HepG2 (cell line): ENCODE measurements at regions of chr16 and their contacts with region 1.

Region 1: DNA sequence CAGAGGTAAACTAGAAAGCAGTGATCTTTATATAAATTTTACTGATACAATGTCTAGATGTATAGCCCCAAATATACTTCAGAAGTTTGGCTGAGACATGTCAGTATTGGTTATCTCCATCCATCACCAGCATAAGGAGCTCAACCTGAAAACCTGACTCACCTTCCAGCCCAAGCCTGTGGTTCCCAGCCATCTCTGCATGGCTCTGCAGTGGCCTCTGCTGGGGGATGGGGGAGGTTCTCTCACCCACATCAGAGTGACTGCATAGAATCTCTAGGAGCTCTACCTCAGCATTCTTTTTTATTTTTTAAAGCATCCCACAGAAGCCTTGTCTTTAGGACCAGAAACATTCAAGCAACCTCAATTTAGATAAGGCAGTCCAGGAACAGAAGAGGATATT is 27.3 kb downstream of the USP7 start:
- DNase-seq: peak; percentile 70
- ATAC-seq: peak; percentile 94
- H3K4me3 ChIP-seq: no peak overlapping the region
- H3K27ac ChIP-seq: no peak overlapping the region
- H3K4me1 ChIP-seq: peaks cover 64% of the 10 kb centered on the region
- H3K27me3 ChIP-seq: no peaks in the 10 kb centered on the region
- CTCF ChIP-seq: peak; percentile 79
- EP300 ChIP-seq: no peak
- POLR2A ChIP-seq: no peak
- RAD21 ChIP-seq: peak; percentile 45

Region 2: DNA sequence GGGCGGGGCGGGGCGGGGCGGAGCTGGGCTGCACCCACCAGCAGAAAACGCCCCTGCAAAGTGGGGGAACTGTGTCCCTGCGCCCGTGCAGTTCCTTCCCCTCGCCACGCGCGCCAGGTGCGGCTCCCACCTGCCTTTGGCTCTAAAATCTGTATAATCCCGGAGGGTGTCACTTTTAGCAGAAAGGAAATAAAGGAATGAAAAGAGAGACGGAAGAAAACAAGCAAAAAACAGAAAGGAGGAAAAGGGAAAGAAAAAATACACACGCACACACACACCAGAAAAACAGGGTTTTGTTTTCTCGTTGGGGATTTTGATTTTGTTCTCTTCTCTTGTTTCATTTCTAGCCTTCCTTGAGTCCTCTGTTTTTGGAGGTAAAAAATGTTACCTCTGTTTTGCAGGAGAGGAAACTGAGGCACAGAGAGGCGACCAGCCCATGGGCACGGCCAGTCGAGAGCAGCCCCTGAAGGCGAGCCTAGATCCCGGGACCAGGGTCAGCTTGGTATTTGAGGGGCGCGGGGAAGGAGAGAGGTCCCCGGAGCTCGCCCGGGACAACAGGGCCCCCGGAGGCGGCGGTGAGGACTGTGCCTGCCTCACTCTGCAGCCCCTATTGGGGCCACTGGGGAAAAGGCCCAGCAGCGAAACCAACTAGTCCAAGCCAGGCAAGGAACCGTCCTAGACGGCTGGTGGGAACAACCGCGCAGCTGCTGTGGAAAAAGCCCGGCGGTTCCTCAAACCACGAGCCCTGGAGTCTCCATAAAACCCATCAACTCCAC is 67.0 kb before region 1 on chr16:
- CTCF ChIA-PET with region 1: no interaction called
- POLR2A ChIA-PET with region 1: no interaction called
- in situ Hi-C with region 1: no loop called
- intact Hi-C with region 1: no loop called
- DNase-seq: peak; percentile 65
- ATAC-seq: peak; percentile 54
- H3K4me3 ChIP-seq: peak overlapping the region; percentile 55 to 76 (median 71)
- H3K27ac ChIP-seq: peak overlapping the region; percentile 46
- H3K4me1 ChIP-seq: peaks cover 76% of the 10 kb centered on the region
- H3K27me3 ChIP-seq: no peaks in the 10 kb centered on the region; a peak in 1 of 5 replicates
- CTCF ChIP-seq: no peak; the same call in 1 of the 2 replicates
- EP300 ChIP-seq: no peak
- POLR2A ChIP-seq: no peak
- RAD21 ChIP-seq: peak; percentile 26; the same call in 1 of the 2 replicates

Region 3: GRCh38 chr16:8951447-8952280 is 15.2 kb after region 1 on chr16:
- CTCF ChIA-PET with region 1: interaction called, 3 read pairs
- POLR2A ChIA-PET with region 1: interaction called, 4 read pairs
- in situ Hi-C with region 1: no loop called
- intact Hi-C with region 1: loop called (anchors 2 kb)
- DNase-seq: no peak
- ATAC-seq: no peak
- H3K4me3 ChIP-seq: 0 out of 6 replicates have a peak overlapping the region, but pooled peaks of 1 of the 3 experiments have one; percentile 1
- H3K27ac ChIP-seq: peak overlapping the region; percentile 3
- H3K4me1 ChIP-seq: peaks cover 94% of the 10 kb centered on the region
- H3K27me3 ChIP-seq: no peaks in the 10 kb centered on the region
- CTCF ChIP-seq: no peak
- EP300 ChIP-seq: no peak
- POLR2A ChIP-seq: peak in 1 of 2 experiments; percentile 26; a peak in 1 of 4 replicates
- RAD21 ChIP-seq: no peak

Region 4: GRCh38 chr16:8958344-8959167 is 22.1 kb after region 1 on chr16:
- CTCF ChIA-PET with region 1: interaction called, 3 read pairs
- POLR2A ChIA-PET with region 1: no interaction called
- in situ Hi-C with region 1: no loop called
- intact Hi-C with region 1: loop called (anchors 2 kb)
- DNase-seq: no peak
- ATAC-seq: no peak; the same call in 2 of the 3 replicates
- H3K4me3 ChIP-seq: peak overlapping the region in 1 of 3 experiments; percentile 3; a peak in 1 of 6 replicates
- H3K27ac ChIP-seq: peak overlapping the region; percentile 2
- H3K4me1 ChIP-seq: peaks cover 79% of the 10 kb centered on the region
- H3K27me3 ChIP-seq: no peaks in the 10 kb centered on the region; a peak in 1 of 5 replicates
- CTCF ChIP-seq: no peak
- EP300 ChIP-seq: no peak
- POLR2A ChIP-seq: 0 out of 4 replicates have a peak, but pooled peaks of 1 of the 2 experiments have one; percentile 28
- RAD21 ChIP-seq: no peak

Region 5: DNA sequence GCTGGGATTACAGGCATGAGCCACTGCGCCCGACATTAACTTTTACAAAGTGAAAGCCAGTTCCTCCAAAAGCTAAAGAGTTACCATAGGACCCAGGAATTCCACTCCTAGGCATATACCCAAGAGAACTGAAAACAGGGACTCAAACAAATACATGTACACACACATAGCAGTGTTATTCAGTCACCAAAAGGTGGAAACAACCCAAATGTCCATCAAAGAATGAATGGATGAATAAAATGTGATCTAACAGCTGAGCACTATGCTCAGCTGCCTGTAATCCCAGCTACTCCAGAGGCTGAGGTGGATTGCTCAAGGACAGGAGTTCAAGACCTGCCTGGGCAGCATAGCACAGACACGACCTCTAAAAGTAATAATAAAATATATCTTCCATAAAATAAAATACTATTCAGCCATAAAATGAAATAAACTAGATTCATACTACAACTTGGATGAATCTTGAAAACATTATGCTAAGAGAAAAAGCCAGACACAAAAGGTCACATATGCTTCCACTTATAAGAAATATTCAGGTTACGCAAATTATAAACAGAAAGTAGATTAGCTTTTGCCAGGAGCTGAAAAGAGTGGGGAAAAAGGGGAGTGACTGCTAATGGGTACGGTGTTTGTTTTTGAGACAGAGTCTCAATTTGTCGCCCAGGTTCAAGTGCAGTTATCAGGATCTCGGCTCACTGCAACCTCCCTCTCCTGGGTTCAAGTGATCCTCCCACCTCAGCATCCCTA is 36.6 kb after region 1 on chr16:
- CTCF ChIA-PET with region 1: no interaction called
- POLR2A ChIA-PET with region 1: no interaction called
- in situ Hi-C with region 1: no loop called
- intact Hi-C with region 1: no loop called
- DNase-seq: no peak
- ATAC-seq: no peak
- H3K4me3 ChIP-seq: no peak overlapping the region
- H3K27ac ChIP-seq: no peak overlapping the region
- H3K4me1 ChIP-seq: peaks cover 10% of the 10 kb centered on the region
- H3K27me3 ChIP-seq: peaks cover 1 to 4% of the 10 kb centered on the region in 2 experiments; a peak in 3 of 5 replicates
- CTCF ChIP-seq: no peak
- EP300 ChIP-seq: no peak
- POLR2A ChIP-seq: no peak
- RAD21 ChIP-seq: no peak

Region 6: DNA sequence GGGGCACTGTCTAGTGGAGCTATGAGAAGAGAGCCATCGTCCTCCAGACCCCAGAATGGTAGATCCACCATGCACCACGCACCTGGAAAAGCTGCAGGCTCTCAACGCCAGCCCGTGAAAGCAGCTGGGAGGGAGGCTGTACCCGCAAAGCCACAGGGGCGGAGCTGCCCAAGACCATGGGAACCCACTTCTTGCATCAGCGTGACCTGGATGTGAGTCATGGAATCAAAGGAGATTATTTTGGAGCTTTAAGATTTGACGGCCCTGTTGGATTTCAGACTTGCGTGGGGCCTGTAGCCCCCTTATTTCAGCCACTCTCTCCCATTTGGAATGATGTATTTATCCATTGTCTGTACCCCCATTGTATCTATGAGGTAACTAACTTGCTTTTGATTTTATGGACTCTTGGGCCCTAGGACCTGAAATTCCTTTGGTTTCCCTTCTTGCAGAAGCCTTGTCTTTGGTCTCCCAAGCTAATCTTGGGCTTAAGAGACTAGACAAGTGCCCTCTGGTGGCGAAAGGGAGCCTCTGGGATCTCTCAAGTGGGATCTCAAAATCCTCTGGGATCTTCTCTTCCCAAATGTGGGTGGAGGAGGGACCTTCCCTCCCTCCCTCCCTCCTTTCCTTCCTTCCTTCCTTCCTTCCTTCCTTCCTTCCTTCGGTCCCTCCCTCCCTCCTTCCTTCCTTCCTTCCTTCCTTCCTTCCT is 96.9 kb after region 1 on chr16:
- CTCF ChIA-PET with region 1: no interaction called
- POLR2A ChIA-PET with region 1: no interaction called
- in situ Hi-C with region 1: no loop called
- intact Hi-C with region 1: loop called (anchors 1 kb)
- DNase-seq: peak; percentile 76
- ATAC-seq: peak; percentile 85
- H3K4me3 ChIP-seq: no peak overlapping the region
- H3K27ac ChIP-seq: no peak overlapping the region
- H3K4me1 ChIP-seq: no peaks in the 10 kb centered on the region
- H3K27me3 ChIP-seq: peaks cover 0 to 6% of the 10 kb centered on the region in 2 experiments; a peak in 3 of 5 replicates
- CTCF ChIP-seq: peak; percentile 76
- EP300 ChIP-seq: no peak
- POLR2A ChIP-seq: no peak
- RAD21 ChIP-seq: peak; percentile 52

Region 7: DNA sequence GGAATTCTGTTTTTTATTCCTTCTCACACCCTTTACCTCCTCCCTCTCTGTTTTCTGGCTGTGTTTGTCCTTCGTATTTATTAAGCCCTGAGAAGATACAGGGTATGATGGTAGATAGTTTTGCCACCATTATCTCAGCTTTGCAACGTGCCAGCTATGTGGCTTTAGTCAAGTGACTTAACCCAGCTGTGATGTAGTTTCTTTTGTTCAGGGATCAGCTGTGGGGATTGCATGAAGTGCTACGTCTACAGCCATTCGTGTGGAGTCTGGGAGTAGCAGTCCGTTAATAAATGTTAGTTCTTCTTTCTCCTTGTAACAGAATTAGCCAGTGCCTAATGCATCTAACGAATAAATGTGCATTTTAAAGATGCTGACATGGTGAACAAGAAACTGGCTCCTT is 283.4 kb after region 1 on chr16:
- CTCF ChIA-PET with region 1: no interaction called
- POLR2A ChIA-PET with region 1: no interaction called
- in situ Hi-C with region 1: no loop called
- intact Hi-C with region 1: no loop called
- DNase-seq: no peak
- ATAC-seq: no peak
- H3K4me3 ChIP-seq: no peak overlapping the region
- H3K27ac ChIP-seq: no peak overlapping the region
- H3K4me1 ChIP-seq: no peaks in the 10 kb centered on the region
- H3K27me3 ChIP-seq: peaks cover 4 to 39% of the 10 kb centered on the region in 2 experiments; a peak in 4 of 5 replicates
- CTCF ChIP-seq: no peak
- EP300 ChIP-seq: no peak
- POLR2A ChIP-seq: no peak
- RAD21 ChIP-seq: no peak